CD8-positive, alpha-beta T cell (primary cell): ENCODE measurements at regions of chr18 and their contacts with region 1.

Region 1: GRCh38 chr18:11937874-11938478 is 29.9 kb upstream of the MPPE1 start:
- DNase-seq: peak; percentile 46 to 82 (median 76)
- ATAC-seq: peak; percentile 62
- H3K4me3 ChIP-seq: no peak overlapping the region
- H3K4me3 Mint-ChIP-seq: no peak overlapping the region
- H3K27ac ChIP-seq: no peak overlapping the region
- H3K27ac Mint-ChIP-seq: no peak overlapping the region
- H3K4me1 ChIP-seq: no peaks in the 10 kb centered on the region
- H3K4me1 Mint-ChIP-seq: no peaks in the 10 kb centered on the region
- H3K27me3 ChIP-seq: peaks cover 0 to 2% of the 10 kb centered on the region in 2 experiments
- H3K27me3 Mint-ChIP-seq: no peaks in the 10 kb centered on the region
- CTCF ChIP-seq: peak; percentile 85

Region 2: GRCh38 chr18:11733031-11733430 is 204.9 kb before region 1 on chr18:
- CTCF ChIA-PET with region 1: interaction called, 10 read pairs
- POLR2A ChIA-PET with region 1: no interaction called
- intact Hi-C with region 1: loop called (anchors 5 kb)
- DNase-seq: peak; percentile 32 to 75 (median 64)
- ATAC-seq: peak; percentile 57
- H3K4me3 ChIP-seq: no peak overlapping the region
- H3K4me3 Mint-ChIP-seq: peak overlapping the region; percentile 29
- H3K27ac ChIP-seq: no peak overlapping the region
- H3K27ac Mint-ChIP-seq: no peak overlapping the region
- H3K4me1 ChIP-seq: no peaks in the 10 kb centered on the region
- H3K4me1 Mint-ChIP-seq: peaks cover 4% of the 10 kb centered on the region
- H3K27me3 ChIP-seq: peaks cover 0 to 3% of the 10 kb centered on the region in 2 experiments
- H3K27me3 Mint-ChIP-seq: peaks cover 34% of the 10 kb centered on the region
- CTCF ChIP-seq: peak; percentile 72

Region 3: GRCh38 chr18:11955239-11956029 is 17.5 kb after region 1 on chr18:
- CTCF ChIA-PET with region 1: interaction called, 67 read pairs
- POLR2A ChIA-PET with region 1: no interaction called
- intact Hi-C with region 1: no loop called
- DNase-seq: no peak
- ATAC-seq: no peak
- H3K4me3 ChIP-seq: no peak overlapping the region
- H3K4me3 Mint-ChIP-seq: no peak overlapping the region
- H3K27ac ChIP-seq: no peak overlapping the region
- H3K27ac Mint-ChIP-seq: no peak overlapping the region
- H3K4me1 ChIP-seq: no peaks in the 10 kb centered on the region
- H3K4me1 Mint-ChIP-seq: no peaks in the 10 kb centered on the region
- H3K27me3 ChIP-seq: no peaks in the 10 kb centered on the region
- H3K27me3 Mint-ChIP-seq: peaks cover 2% of the 10 kb centered on the region
- CTCF ChIP-seq: no peak

Region 4: DNA sequence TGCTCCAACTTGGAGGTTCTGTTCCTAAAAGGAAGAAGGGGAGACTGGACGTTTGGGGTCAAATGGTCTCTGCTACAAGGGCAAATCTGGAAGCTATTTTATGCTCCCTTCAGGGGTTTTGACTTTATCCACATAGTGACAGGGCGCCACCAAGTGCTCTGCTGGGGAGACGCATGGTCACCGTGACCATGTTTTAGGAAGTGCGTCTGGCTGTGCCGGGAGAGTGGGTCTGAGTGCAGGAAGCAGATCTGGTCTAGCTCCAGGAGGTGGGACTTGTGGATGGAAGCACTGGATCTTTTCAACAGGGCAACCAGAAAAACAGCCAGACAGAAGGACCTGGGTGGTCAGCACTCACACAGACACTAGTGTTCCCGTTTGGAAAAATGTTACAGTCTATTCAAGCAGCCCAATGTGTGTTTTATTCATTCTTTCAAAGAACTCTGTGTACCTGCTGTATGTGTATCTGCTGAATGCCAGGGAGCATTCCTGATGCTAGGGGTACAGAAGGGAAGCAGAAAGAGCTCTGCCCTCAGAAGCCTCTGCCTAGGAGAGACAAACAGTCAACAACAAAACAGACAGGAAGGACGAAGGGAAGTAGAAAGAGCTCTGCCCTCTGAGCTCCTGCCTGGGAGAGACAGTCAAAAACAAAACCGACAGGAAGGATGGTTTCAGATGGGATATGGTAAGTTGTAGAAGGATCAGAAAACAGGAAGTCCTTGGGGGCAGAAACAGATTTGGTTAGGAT is 57.6 kb after region 1 on chr18:
- CTCF ChIA-PET with region 1: interaction called, 448 read pairs
- POLR2A ChIA-PET with region 1: interaction called, 3 read pairs
- intact Hi-C with region 1: loop called (anchors 1 kb)
- DNase-seq: peak; percentile 34 to 73 (median 58)
- ATAC-seq: peak; percentile 88
- H3K4me3 ChIP-seq: no peak overlapping the region
- H3K4me3 Mint-ChIP-seq: peak overlapping the region; percentile 24
- H3K27ac ChIP-seq: no peak overlapping the region
- H3K27ac Mint-ChIP-seq: no peak overlapping the region
- H3K4me1 ChIP-seq: peaks cover 9% of the 10 kb centered on the region
- H3K4me1 Mint-ChIP-seq: peaks cover 12% of the 10 kb centered on the region
- H3K27me3 ChIP-seq: no peaks in the 10 kb centered on the region
- H3K27me3 Mint-ChIP-seq: no peaks in the 10 kb centered on the region
- CTCF ChIP-seq: peak; percentile 69

Region 5: GRCh38 chr18:12015416-12016062 is 77.6 kb after region 1 on chr18:
- CTCF ChIA-PET with region 1: interaction called, 17 read pairs
- POLR2A ChIA-PET with region 1: no interaction called
- intact Hi-C with region 1: no loop called
- DNase-seq: no peak
- ATAC-seq: no peak
- H3K4me3 ChIP-seq: no peak overlapping the region
- H3K4me3 Mint-ChIP-seq: no peak overlapping the region
- H3K27ac ChIP-seq: no peak overlapping the region
- H3K27ac Mint-ChIP-seq: no peak overlapping the region
- H3K4me1 ChIP-seq: no peaks in the 10 kb centered on the region
- H3K4me1 Mint-ChIP-seq: no peaks in the 10 kb centered on the region
- H3K27me3 ChIP-seq: no peaks in the 10 kb centered on the region
- H3K27me3 Mint-ChIP-seq: no peaks in the 10 kb centered on the region
- CTCF ChIP-seq: no peak

Region 6: DNA sequence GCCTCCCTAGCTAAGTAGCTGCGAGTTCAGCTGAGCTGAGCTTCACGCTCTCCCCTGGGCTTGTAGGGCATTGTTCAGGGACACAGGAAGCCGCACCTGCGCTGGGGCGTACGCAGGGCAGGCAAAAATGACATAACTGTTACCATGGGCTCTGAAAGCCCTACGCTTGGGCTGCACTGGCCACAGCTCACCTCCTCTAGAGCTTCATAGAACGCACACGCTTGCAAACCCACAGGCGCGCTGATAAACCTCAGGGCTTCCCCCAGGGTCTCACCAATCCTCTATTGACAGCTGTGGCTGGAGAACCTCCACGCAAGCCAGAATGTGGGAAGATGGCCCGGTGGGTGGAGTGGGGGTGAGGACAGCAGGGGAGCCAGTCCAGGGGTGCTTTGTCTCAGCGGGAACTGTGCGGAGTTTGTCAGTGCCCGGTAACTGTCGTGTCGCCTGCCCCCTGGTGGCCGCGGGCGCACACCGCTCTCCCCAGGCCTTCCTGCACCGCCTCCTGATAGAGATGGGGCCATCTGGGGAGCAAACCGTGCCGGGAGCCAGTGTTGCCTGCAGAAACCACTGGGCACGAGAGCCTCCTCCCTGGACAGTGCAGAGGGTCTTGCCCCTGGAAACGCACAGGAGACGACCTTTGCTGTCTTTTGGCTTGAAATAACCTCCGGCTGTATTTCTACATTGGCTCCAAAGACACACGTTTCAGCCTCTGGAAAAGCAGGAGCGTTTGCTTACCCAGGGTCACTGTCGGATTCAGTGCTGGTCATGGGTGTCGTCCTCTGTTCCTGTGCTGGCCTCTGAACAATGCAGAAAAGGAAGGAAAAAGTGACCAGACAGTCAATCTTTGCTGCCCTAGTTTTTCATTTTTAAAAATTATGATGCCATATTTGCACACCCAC is 299.2 kb after region 1 on chr18:
- CTCF ChIA-PET with region 1: no interaction called
- POLR2A ChIA-PET with region 1: no interaction called
- intact Hi-C with region 1: loop called in 1 of 2 experiments (anchors 5 kb)
- DNase-seq: peak; percentile 30 to 69 (median 54)
- ATAC-seq: peak; percentile 69
- H3K4me3 ChIP-seq: no peak overlapping the region
- H3K4me3 Mint-ChIP-seq: no peak overlapping the region
- H3K27ac ChIP-seq: no peak overlapping the region
- H3K27ac Mint-ChIP-seq: no peak overlapping the region
- H3K4me1 ChIP-seq: no peaks in the 10 kb centered on the region
- H3K4me1 Mint-ChIP-seq: no peaks in the 10 kb centered on the region
- H3K27me3 ChIP-seq: no peaks in the 10 kb centered on the region
- H3K27me3 Mint-ChIP-seq: peaks cover 18% of the 10 kb centered on the region
- CTCF ChIP-seq: peak; percentile 80